Head of caudate nucleus (tissue), 42 donors: ENCODE measurements at regions of chr2 and their contacts with region 1.

Region 1: GRCh38 chr2:20350753-20351554 is at the start of gene PUM2:
- DNase-seq: peak; percentile 77 to 97 (median 92)

Region 2: DNA sequence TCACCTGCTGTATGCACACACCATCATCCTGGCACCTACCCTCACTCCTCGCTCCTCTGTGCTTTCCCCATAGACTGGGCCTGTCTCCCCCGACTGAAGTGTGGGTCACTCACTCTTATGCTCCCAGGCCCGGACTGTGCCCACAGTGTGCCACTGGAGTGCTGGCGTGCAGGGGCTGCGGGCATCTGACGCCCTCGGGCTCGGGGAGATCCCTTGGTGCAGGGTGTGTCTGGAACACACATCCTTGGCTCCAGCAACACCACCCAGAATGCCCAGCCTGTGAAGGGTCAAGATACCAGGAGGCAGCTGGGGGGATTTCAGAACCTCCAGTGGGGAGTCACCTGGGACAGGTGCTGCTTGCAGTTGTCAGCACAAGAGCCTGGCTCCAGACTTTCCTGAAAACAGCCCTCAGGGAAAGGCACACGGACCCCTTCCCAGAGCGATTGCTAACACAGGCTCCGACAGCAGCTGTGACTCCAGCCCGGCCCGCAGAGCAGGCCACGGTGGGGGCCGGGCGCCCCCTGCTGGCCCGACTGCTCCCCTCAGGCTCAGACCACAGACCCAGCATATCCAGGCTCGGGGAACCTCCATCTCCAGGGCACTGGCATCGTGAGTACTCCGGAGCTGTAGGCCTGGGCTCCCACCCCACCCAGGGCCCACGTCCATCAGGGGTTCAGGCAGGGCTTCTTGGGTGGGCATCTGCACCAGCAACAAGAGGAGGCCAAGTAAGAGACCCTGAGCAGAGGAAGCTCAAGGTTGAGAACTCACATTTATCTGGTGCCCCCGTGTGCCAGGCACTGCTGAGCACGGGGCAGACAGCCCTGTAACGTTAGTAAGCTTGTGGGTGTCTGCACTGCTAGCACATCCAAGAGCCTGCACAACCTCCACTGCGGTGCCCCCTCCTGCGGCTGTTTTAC is 291.4 kb after region 1 on chr2:
- intact Hi-C with region 1: loop called (anchors 10 kb)
- DNase-seq: peak; percentile 66 to 93 (median 85)